Ascending aorta (tissue), 2 donors: ENCODE measurements at regions of chr1 and their contacts with region 1.

Region 1: DNA sequence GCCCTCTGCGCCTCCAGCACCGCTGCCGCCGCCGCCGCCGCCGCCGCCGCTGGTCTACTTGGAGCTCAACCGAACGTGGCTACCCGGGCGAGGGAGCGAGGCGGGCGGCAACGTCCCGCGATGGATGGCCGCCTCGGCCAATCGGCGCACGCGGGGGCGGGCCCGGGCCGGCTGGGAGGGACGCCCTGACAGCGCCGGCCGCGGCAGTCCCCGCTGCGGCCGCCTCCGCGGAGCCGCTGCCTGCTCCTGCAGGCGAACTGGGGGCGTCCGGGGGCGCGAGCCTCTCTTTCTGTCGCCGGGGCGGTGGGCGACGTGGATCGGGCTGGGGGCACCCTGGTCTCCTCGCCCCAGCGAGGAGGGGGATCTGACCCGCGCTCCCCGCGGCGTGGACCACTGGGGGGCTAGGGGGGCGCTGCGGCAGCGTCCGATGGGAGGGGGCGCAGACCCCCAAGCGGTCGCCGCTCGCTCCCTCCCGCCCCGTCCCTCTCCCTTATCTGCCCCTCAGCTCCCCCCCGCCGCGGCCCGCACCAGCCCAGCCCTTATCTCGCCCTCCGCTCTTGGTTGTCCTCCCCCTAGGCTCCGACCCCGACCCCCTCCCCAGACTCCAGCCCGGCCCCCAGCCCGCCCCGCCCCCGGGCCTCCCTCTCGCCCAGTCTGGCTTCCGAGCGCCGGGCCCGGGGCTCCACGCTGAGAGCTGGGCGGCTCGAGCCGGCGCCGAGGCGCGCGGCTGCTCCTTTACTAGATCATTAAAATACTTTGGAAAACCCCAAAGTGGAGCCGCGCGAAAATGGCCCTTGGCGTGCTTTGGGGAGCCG is at the start of gene SSBP3:
- DNase-seq: peak; percentile 53 to 95
- H3K4me3 ChIP-seq: peak within 1 kb of the TSS; percentile 91 to 96
- H3K27ac ChIP-seq: peak within 1 kb of the TSS; percentile 85 to 86
- H3K4me1 ChIP-seq: peaks cover 6 to 35% of the 10 kb centered on the region in 2 donors
- H3K27me3 ChIP-seq: no peaks in the 10 kb centered on the region
- CTCF ChIP-seq: peak in 1 of 3 experiments; percentile 22
- total RNA-seq, gene SSBP3: 51.0 TPM

Region 2: GRCh38 chr1:53889304-53890298 is 516.9 kb before region 1 on chr1 and contains the start of gene YIPF1:
- intact Hi-C with region 1: loop called (anchors 5 kb)
- DNase-seq: peak; percentile 68 to 96
- H3K4me3 ChIP-seq: peak within 1 kb of the TSS; percentile 79 to 83
- H3K27ac ChIP-seq: peak within 1 kb of the TSS; percentile 71 to 87
- H3K4me1 ChIP-seq: peaks cover 7 to 9% of the 10 kb centered on the region in 2 donors
- H3K27me3 ChIP-seq: no peaks in the 10 kb centered on the region
- CTCF ChIP-seq: no peak
- total RNA-seq, gene YIPF1: 17.0 TPM

Region 3: GRCh38 chr1:54107131-54107530 is 299.4 kb before region 1 on chr1:
- intact Hi-C with region 1: no loop called
- DNase-seq: no peak
- H3K4me3 ChIP-seq: no peak overlapping the region
- H3K27ac ChIP-seq: no peak overlapping the region
- H3K4me1 ChIP-seq: no peaks in the 10 kb centered on the region
- H3K27me3 ChIP-seq: no peaks in the 10 kb centered on the region
- CTCF ChIP-seq: peak in 1 of 3 experiments; percentile 17

Region 4: GRCh38 chr1:54121482-54122134 is 284.9 kb before region 1 on chr1:
- intact Hi-C with region 1: loop called (anchors 5 kb)
- DNase-seq: peak in 1 of 2 donors; percentile 87
- H3K4me3 ChIP-seq: peak overlapping the region; percentile 25 to 60
- H3K27ac ChIP-seq: no peak overlapping the region
- H3K4me1 ChIP-seq: peaks cover 0 to 3% of the 10 kb centered on the region in 2 donors
- H3K27me3 ChIP-seq: no peaks in the 10 kb centered on the region
- CTCF ChIP-seq: peak; percentile 68 to 85 (median 81)

Region 5: DNA sequence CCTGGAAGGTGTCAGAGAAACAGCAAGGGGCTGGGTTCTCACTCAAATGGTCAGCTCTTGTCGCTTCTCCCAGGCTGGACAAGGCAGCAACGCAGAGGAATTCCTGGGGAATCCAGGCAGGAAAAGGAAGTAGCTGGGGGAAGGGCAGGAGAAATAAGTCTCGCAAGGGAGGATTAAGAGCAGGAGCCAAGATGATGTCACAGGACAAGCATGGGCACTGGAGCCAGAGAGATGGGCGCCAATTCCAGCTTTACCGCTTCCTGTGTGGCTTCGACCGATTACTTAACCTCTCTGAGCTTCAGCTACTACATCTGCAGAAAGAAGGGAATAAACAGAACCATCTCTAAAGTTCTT is 70.8 kb before region 1 on chr1:
- intact Hi-C with region 1: loop called (anchors 5 kb)
- DNase-seq: peak in 1 of 2 donors; percentile 87
- H3K4me3 ChIP-seq: peak overlapping the region in 1 of 2 donors; percentile 56
- H3K27ac ChIP-seq: peak overlapping the region; percentile 89 to 91
- H3K4me1 ChIP-seq: peaks cover 15 to 48% of the 10 kb centered on the region in 2 donors
- H3K27me3 ChIP-seq: no peaks in the 10 kb centered on the region
- CTCF ChIP-seq: no peak

Region 6: GRCh38 chr1:54581621-54582035 is 175.1 kb after region 1 on chr1:
- intact Hi-C with region 1: loop called (anchors 2 kb)
- DNase-seq: peak; percentile 90 to 98
- H3K4me3 ChIP-seq: no peak overlapping the region
- H3K27ac ChIP-seq: peak overlapping the region; percentile 93 to 96
- H3K4me1 ChIP-seq: peaks cover 0 to 37% of the 10 kb centered on the region in 2 donors
- H3K27me3 ChIP-seq: no peaks in the 10 kb centered on the region
- CTCF ChIP-seq: peak in 2 of 3 experiments; percentile 6 to 35

Region 7: GRCh38 chr1:54886724-54887664 is 480.4 kb after region 1 on chr1 and contains the start of gene DHCR24:
- intact Hi-C with region 1: loop called (anchors 5 kb)
- DNase-seq: peak; percentile 34 to 87
- H3K4me3 ChIP-seq: peak within 1 kb of the TSS; percentile 81 to 90
- H3K27ac ChIP-seq: peak within 1 kb of the TSS; percentile 31 to 58
- H3K4me1 ChIP-seq: peaks cover 0 to 5% of the 10 kb centered on the region in 2 donors
- H3K27me3 ChIP-seq: no peaks in the 10 kb centered on the region
- CTCF ChIP-seq: no peak
- total RNA-seq, gene DHCR24: 16.6 TPM

Region 8: DNA sequence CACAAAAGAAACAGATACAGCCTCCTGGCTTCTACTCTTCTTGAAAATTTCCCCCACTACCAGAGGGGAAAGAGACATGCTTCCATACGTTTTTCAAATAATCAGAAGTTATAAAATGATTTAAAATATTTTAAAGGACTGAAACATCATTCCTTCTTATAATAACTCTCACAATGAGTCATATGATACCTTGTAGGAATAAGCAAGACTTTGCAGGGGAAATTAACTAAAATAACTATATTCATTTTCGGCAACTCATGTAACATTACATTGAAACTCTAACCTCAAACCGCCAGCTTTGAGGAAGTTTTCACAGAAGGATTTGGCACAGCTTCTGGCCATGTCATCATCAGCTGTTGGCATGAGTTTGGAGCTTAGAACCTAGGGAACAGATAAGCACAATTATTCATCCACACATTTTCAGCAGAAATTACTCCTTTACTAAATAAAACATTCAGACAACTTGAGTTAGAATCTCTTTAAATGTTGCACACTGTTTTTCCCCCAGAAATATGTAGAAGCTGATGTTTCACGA is 722.7 kb after region 1 on chr1:
- intact Hi-C with region 1: no loop called
- DNase-seq: peak in 1 of 2 donors; percentile 78
- H3K4me3 ChIP-seq: no peak overlapping the region
- H3K27ac ChIP-seq: peak overlapping the region; percentile 14 to 17
- H3K4me1 ChIP-seq: peaks cover 0 to 8% of the 10 kb centered on the region in 2 donors
- H3K27me3 ChIP-seq: no peaks in the 10 kb centered on the region
- CTCF ChIP-seq: no peak